WTC11 (cell line): ENCODE measurements at regions of chr5 and their contacts with region 1.

Region 1: GRCh38 chr5:177362610-177363507 is 5.1 kb downstream of the RGS14 start:
- DNase-seq: peak; percentile 76
- ATAC-seq: peak; percentile 39
- H3K4me3 Mint-ChIP-seq: peak overlapping the region; percentile 76
- H3K27ac Mint-ChIP-seq: peak overlapping the region; percentile 74; the same call in 1 of the 2 replicates
- H3K4me1 Mint-ChIP-seq: peaks cover 40% of the 10 kb centered on the region
- H3K27me3 Mint-ChIP-seq: peaks cover 14% of the 10 kb centered on the region
- CTCF ChIP-seq: no peak

Region 2: DNA sequence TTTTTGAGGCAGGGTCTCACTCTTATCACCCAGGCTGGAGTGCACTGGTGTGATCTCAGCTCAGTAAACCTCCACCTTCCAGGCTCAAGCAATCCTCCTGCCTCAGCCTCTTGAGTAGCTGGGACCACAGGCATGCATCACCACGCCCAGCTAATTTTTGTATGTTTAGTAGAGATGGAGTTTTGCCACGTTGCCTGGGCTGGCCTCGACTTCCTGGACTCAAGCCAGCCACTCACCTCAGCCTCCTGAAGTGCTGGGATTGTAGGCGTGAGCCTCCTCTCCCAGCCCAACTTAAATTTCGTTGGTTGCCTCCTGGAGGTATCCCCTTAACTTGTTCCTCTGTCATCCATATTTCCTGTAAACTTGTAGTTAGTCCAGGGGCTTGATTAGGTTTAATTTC is 106.6 kb before region 1 on chr5:
- CTCF ChIA-PET with region 1: no interaction called
- POLR2A ChIA-PET with region 1: no interaction called
- DNase-seq: no peak
- ATAC-seq: no peak
- H3K4me3 Mint-ChIP-seq: no peak overlapping the region
- H3K27ac Mint-ChIP-seq: peak overlapping the region; percentile 16; the same call in 1 of the 2 replicates
- H3K4me1 Mint-ChIP-seq: no peaks in the 10 kb centered on the region
- H3K27me3 Mint-ChIP-seq: no peaks in the 10 kb centered on the region
- CTCF ChIP-seq: no peak

Region 3: DNA sequence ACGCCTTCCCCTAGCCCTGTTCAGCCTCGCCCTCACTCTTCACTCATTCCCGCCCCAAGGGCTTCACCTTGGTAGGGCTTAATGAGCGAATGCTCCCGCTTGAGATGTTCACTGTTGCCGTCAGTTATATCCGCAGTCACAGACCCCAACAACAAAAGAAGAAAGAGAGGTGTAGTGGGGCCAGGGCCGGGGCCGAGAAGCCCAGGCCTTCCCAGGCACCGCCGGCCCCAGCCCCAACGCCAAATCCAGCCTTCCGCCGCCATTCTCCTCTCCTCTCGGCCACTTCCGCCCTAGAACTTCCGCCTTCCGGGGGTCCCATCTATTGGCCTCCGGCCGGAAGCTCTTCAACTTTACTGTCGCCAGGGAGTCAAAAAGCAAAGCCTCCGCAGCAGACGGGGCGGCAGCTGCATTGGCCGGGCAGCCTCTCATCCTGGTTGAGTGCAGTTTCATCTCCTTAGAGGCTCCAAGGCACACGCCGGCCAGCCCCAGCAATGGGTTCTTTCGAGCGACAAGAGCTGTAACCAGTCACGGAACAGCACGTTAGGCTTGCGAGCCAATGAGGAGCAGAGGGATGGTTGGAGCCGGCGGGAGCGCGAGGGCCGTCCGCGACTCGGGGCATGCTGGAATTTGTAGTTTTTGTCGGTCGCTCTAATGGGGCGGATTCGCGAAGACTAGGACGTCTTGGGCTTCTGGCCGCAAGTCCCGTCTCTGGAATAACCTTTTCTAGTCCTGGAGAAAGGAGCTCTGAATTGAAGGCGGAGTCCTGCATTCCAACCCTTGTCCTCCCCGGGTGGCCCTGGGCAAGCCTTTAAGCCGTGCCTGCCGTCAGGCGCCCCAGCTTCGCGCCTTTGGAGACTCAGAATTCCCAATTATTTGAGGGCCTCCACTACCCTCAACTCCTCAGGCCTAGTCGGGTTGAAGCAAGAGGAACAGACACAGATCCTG is 11.2 kb before region 1 on chr5 and contains the start of gene LMAN2:
- CTCF ChIA-PET with region 1: interaction called, 14 read pairs
- POLR2A ChIA-PET with region 1: interaction called, 10 read pairs
- DNase-seq: peak; percentile 90
- ATAC-seq: peak; percentile 98
- H3K4me3 Mint-ChIP-seq: peak within 1 kb of the TSS; percentile 98
- H3K27ac Mint-ChIP-seq: peak within 1 kb of the TSS; percentile 100
- H3K4me1 Mint-ChIP-seq: peaks cover 32% of the 10 kb centered on the region
- H3K27me3 Mint-ChIP-seq: peaks cover 28% of the 10 kb centered on the region
- CTCF ChIP-seq: no peak
- total RNA-seq, gene LMAN2: 141 to 162 TPM (median 147 TPM) in 3 replicates

Region 4: DNA sequence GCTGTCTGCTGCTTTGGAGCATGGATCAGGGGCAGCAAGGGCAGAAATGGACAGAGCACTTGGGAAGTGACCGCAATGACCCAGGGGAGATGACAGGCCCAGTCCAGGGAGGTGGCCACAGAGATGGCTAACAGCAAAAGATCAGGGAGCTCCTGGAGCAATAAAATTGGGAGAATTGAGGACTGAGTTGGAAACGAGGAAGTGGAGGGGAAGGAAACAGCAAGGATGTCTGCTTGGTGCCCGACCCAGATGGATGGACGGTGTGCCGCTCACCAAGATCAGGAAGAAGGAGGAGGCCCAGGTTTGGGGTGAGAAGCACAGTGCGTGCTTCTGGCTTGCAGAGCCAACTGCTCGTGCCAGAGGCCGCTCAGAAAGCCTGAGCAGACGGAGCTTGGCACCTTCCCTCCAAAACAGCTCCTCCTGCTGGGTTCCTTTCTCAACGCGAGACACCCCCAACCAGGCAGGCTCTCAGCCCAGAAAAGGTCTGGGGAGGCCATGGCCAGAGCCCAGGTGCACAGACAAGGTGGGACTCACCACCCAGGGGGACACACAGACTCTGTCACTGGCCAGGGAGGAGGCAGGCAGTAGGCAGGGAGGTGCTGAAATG is 19.7 kb after region 1 on chr5:
- CTCF ChIA-PET with region 1: interaction called, 18 read pairs
- POLR2A ChIA-PET with region 1: no interaction called
- DNase-seq: peak; percentile 46
- ATAC-seq: peak; percentile 70
- H3K4me3 Mint-ChIP-seq: no peak overlapping the region
- H3K27ac Mint-ChIP-seq: no peak overlapping the region
- H3K4me1 Mint-ChIP-seq: peaks cover 17% of the 10 kb centered on the region
- H3K27me3 Mint-ChIP-seq: peaks cover 18% of the 10 kb centered on the region
- CTCF ChIP-seq: no peak

Region 5: DNA sequence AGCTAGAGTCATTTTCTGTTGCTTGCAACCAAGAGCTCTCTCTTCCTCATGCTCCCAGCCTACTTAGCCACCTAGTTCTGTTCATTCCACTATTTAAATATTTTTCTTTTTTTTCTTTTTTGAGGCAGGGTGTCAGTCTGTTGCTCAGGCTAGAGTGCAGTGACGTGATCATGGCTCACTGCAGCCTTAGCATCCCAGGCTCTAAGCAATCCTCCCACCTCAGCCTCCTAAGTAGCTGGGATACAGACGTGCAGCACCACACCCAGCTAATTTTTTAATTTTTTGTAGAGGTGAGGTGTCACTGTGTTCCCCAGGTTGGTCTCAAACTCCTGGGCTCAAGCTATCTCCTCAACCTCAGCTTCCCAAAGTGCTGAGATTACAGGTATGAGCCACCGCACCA is 51.6 kb after region 1 on chr5:
- CTCF ChIA-PET with region 1: no interaction called
- POLR2A ChIA-PET with region 1: no interaction called
- DNase-seq: no peak
- ATAC-seq: no peak
- H3K4me3 Mint-ChIP-seq: no peak overlapping the region
- H3K27ac Mint-ChIP-seq: no peak overlapping the region
- H3K4me1 Mint-ChIP-seq: no peaks in the 10 kb centered on the region
- H3K27me3 Mint-ChIP-seq: peaks cover 54% of the 10 kb centered on the region
- CTCF ChIP-seq: no peak

Region 6: DNA sequence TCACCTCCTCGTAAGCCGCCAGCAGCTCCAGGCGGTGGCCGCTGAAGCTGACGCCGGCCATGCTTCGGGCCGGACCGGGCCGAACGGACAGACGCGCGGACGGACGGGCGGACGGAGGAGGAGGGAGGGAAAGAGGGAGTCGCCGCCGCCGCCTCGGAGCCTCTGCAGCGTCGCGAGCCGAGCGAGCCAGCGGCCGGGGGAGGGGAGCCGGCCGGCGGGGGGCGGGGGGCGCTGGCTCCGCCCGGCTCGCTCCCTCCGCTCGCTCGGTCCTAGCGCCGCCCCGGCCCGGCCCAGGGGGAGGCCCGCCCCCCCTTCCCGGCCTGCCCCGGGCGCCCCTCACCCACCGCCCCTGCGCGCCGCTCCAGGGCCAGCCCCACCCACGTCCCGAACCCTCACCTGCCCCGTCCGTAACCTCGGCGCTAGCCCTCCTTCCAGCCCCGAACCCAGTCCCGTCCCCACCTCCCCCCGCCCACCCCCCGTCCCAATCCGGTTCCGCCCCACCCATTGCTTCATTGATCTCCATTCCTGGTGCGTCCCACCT is 110.7 kb after region 1 on chr5 and contains the start of gene DBN1:
- CTCF ChIA-PET with region 1: no interaction called
- POLR2A ChIA-PET with region 1: no interaction called
- DNase-seq: peak; percentile 64
- ATAC-seq: peak; percentile 51
- H3K4me3 Mint-ChIP-seq: peak within 1 kb of the TSS; percentile 76
- H3K27ac Mint-ChIP-seq: peak within 1 kb of the TSS; percentile 69
- H3K4me1 Mint-ChIP-seq: peaks cover 56% of the 10 kb centered on the region
- H3K27me3 Mint-ChIP-seq: no peaks in the 10 kb centered on the region
- CTCF ChIP-seq: no peak
- total RNA-seq, gene DBN1: 267 to 288 TPM (median 269 TPM) in 3 replicates